Dendritic cell treated with granulocyte-macrophage colony-stimulating factor and Interleukin-4, amounts not matched to agents 40 ng/mL and 50 ng/mL, for 4 days (primary cell): ENCODE measurements at regions of chr12 and their contacts with region 1.

Region 1: GRCh38 chr12:57238854-57239554 is 9.5 kb downstream of the SHMT2 start:
- H3K4me3 Mint-ChIP-seq: peak overlapping the region; percentile 81
- H3K27ac Mint-ChIP-seq: peak overlapping the region; percentile 45
- H3K4me1 Mint-ChIP-seq: peaks cover 77% of the 10 kb centered on the region
- H3K27me3 Mint-ChIP-seq: peaks cover 89% of the 10 kb centered on the region

Region 2: GRCh38 chr12:57213058-57213715 is 25.8 kb before region 1 on chr12:
- intact Hi-C with region 1: loop called (anchors 1 kb)
- H3K4me3 Mint-ChIP-seq: no peak overlapping the region
- H3K27ac Mint-ChIP-seq: no peak overlapping the region
- H3K4me1 Mint-ChIP-seq: peaks cover 40% of the 10 kb centered on the region
- H3K27me3 Mint-ChIP-seq: peaks cover 43% of the 10 kb centered on the region

Region 3: GRCh38 chr12:57435293-57435692 is 196.3 kb after region 1 on chr12:
- intact Hi-C with region 1: no loop called
- H3K4me3 Mint-ChIP-seq: no peak overlapping the region
- H3K27ac Mint-ChIP-seq: peak overlapping the region; percentile 60
- H3K4me1 Mint-ChIP-seq: peaks cover 14% of the 10 kb centered on the region
- H3K27me3 Mint-ChIP-seq: no peaks in the 10 kb centered on the region